Heart left ventricle (tissue), 16 donors: ENCODE measurements at regions of chr18 and their contacts with region 1.

Region 1: DNA sequence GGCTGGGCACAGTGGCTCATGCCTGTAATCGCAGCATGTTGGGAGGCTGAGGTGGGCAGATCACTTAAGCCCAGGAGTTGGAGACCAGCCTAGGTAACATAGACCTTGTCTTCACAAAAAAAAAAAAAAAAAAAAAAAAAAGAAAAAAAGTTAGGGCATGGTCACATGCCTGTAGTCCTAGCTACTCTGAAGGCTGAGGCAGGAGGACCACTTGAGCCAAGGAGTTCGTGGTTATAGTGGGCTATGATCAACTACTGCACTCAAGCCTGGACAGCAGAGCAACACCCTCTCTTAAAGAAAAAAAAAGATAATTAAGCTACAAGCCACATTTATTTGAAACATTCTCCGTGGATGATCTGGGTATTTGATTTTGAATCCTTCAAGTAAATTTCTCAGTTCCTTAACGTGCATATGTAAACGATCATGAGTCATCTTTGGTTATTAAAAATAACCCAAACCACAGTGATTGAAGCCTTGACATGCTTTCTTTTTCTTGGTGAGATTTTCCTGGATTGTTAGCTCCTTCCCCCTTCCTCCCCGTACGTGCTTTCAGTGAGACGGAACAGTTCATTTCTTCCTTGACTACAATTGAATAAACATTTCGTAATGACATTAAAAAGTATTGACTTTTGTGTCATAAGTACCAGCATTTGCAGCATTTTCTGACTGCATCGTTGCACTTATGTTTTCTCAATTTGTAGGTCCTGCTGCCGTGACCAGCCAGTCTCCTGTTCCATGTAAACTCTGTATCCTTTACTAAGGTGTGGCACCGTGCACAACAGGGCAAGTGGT is 20.3 kb downstream of the RMC1 start:
- DNase-seq: no peak
- ATAC-seq: no peak
- H3K4me3 ChIP-seq: no peak overlapping the region
- H3K27ac ChIP-seq: no peak overlapping the region
- H3K4me1 ChIP-seq: peaks cover 0 to 18% (median 0%) of the 10 kb centered on the region in 12 donors
- H3K27me3 ChIP-seq: no peaks in the 10 kb centered on the region
- CTCF ChIP-seq: no peak
- POLR2A ChIP-seq: no peak

Region 2: GRCh38 chr18:23703057-23703986 is 179.7 kb after region 1 on chr18:
- intact Hi-C with region 1: loop called in 5 of 10 experiments (anchors 5 to 10 kb)
- DNase-seq: peak in 1 of 5 donors; percentile 28
- ATAC-seq: peak; percentile 50 to 89 (median 77)
- H3K4me3 ChIP-seq: no peak overlapping the region
- H3K27ac ChIP-seq: peak overlapping the region in 2 of 12 donors; percentile 26 to 55
- H3K4me1 ChIP-seq: peaks cover 0 to 9% (median 0%) of the 10 kb centered on the region in 12 donors
- H3K27me3 ChIP-seq: no peaks in the 10 kb centered on the region
- CTCF ChIP-seq: peak; percentile 38 to 74 (median 56)
- POLR2A ChIP-seq: no peak